IMR-90 (cell line): ENCODE measurements at regions of chr22 and their contacts with region 1.

Region 1: DNA sequence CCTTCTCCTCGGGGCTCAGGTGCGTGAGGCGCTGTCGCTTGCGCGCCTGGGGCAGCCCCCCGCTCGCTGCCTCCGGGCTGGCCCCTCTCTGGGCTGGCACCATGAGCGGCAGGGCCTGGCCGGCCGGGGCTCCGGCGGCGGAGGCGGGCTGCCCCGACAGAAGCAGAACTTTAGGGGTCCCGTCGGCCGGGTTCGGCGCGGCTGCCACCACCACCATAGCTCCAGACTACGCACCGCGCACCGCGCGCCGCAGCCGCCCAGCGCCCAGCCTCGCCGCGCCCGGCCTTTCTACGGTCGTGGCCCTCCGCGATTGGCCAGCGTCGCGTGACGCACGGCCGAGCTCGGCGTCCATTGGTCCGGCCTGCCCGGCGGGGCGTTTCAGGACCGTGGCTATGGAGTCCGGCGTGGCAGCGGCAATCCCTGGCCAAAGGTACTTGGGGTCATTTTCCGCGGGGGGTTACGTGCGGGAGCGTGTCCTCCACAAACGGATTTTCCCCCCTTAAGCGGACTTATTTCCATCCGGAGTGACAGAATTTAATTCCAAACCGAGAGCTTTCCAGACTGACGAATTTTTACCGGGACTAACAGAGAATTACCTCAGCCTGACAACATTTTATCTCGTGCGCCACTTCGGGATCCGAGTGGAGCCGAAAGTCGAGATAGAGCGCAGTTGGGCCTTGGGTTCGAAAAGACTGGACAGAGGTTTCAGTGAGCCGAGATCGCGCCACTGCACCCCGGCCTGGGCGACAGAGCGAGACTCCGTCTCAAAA is at the start of gene XBP1:
- DNase-seq: peak; percentile 93
- ATAC-seq: peak; percentile 97
- H3K4me3 ChIP-seq: peak within 1 kb of the TSS; percentile 91
- H3K27ac ChIP-seq: peak within 1 kb of the TSS; percentile 87
- H3K4me1 ChIP-seq: no peaks in the 10 kb centered on the region
- H3K27me3 ChIP-seq: no peaks in the 10 kb centered on the region
- CTCF ChIP-seq: no peak
- POLR2A ChIP-seq: peak; percentile 98
- RAD21 ChIP-seq: no peak
- total RNA-seq, gene XBP1: 195 and 223 TPM in 2 replicates

Region 2: GRCh38 chr22:28772633-28773460 is 27.6 kb before region 1 on chr22 and contains the start of gene CCDC117:
- CTCF ChIA-PET with region 1: no interaction called
- POLR2A ChIA-PET with region 1: interaction called, 16 read pairs
- dilution Hi-C with region 1: no loop called
- in situ Hi-C with region 1: no loop called
- intact Hi-C with region 1: no loop called
- DNase-seq: peak; percentile 95
- ATAC-seq: peak; percentile 95
- H3K4me3 ChIP-seq: peak within 1 kb of the TSS; percentile 61
- H3K27ac ChIP-seq: peak within 1 kb of the TSS; percentile 79
- H3K4me1 ChIP-seq: no peaks in the 10 kb centered on the region
- H3K27me3 ChIP-seq: no peaks in the 10 kb centered on the region
- CTCF ChIP-seq: peak; percentile 45
- POLR2A ChIP-seq: peak; percentile 71; the same call in 1 of the 2 replicates
- RAD21 ChIP-seq: no peak; the same call in 1 of the 2 replicates
- total RNA-seq, gene CCDC117: 7.0 and 15.6 TPM in 2 replicates